ENCODE measurements at regions of chr17 and their contacts with region 1.

Region 1: DNA sequence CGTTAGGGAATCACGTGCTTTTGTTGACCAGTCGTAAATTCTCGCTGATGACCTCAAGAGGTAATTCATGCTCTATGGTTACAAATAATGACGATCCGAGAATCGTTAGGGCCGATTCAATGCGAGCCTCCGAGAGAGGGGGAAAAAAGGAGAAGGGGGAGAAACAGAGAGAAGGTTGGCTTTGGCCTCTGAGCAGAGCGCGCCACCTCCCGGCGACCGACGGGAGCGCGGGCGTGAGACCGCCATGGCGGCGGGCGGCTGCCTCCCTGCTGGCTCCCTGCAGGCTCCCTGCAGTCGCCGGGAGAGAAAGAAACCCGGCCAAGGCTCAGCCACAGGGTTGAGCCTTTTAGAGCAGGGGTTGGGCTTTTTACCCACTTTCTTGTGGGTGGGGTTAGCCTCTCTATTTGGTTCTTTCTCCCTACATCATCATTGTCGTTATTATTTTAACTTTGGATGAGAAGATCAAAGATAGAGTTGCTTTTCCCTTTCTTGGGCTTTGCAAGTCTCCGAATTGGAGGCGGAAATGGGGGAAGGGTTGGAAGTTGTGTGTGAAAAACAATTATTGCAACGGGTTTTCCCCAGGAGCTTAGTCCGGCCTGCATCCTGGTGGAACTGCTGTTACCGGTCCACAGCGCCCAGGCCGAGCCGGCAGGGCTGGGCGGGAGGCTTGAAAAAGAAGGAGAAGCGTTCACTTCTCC is 410 bp upstream of the HOXB5 start:
- DNase-seq: peak; percentile 90
- ATAC-seq: peak; percentile 67
- H3K4me3 Mint-ChIP-seq: peak overlapping the region; percentile 67
- H3K27ac Mint-ChIP-seq: no peak overlapping the region
- H3K4me1 Mint-ChIP-seq: peaks cover 40% of the 10 kb centered on the region
- H3K27me3 Mint-ChIP-seq: peaks cover 80% of the 10 kb centered on the region

Region 2: GRCh38 chr17:48131216-48131824 is 462.7 kb before region 1 on chr17:
- CTCF ChIA-PET with region 1: interaction called, 5 read pairs
- POLR2A ChIA-PET with region 1: no interaction called
- intact Hi-C with region 1: loop called in 1 of 2 experiments (anchors 5 kb)
- DNase-seq: peak; percentile 68
- ATAC-seq: peak; percentile 85
- H3K4me3 Mint-ChIP-seq: no peak overlapping the region
- H3K27ac Mint-ChIP-seq: peak overlapping the region; percentile 2
- H3K4me1 Mint-ChIP-seq: no peaks in the 10 kb centered on the region
- H3K27me3 Mint-ChIP-seq: no peaks in the 10 kb centered on the region

Region 3: GRCh38 chr17:48259694-48260291 is 334.2 kb before region 1 on chr17:
- CTCF ChIA-PET with region 1: interaction called, 13 read pairs
- POLR2A ChIA-PET with region 1: no interaction called
- intact Hi-C with region 1: loop called (anchors 2 to 5 kb)
- DNase-seq: no peak
- ATAC-seq: no peak
- H3K4me3 Mint-ChIP-seq: no peak overlapping the region
- H3K27ac Mint-ChIP-seq: no peak overlapping the region
- H3K4me1 Mint-ChIP-seq: peaks cover 5% of the 10 kb centered on the region
- H3K27me3 Mint-ChIP-seq: no peaks in the 10 kb centered on the region

Region 4: DNA sequence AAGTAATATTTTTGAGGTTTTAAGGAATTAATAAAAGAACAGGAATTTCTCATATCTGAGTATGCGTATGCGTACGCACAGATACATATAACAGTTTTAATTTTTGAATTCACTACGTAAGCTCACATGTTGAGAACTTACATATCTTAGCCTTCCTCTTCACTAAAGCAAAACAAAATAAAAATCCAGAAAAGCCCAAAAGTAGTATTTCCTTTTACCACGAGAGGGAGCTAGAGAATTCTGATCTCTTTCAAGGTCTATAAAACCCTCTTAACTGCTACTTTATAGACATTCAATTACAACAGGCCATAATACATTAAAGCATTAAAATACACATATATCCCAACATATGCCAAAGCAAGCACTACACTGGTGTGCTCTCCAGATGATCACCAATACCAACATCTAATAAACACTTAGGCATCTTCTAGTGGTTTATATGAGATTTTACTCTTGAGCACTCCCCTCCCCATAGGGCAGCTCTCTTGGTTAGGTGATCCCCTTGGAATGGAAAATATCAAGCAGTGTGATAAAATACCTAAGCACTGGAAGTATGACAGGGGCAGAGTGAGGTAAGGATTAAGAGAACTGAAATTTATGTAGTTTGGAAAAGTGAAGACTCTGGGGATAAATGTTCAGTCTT is 258.0 kb before region 1 on chr17:
- CTCF ChIA-PET with region 1: interaction called, 74 read pairs
- POLR2A ChIA-PET with region 1: interaction called, 3 read pairs
- intact Hi-C with region 1: loop called in 1 of 2 experiments (anchors 1 kb)
- DNase-seq: no peak
- ATAC-seq: peak; percentile 51
- H3K4me3 Mint-ChIP-seq: no peak overlapping the region
- H3K27ac Mint-ChIP-seq: no peak overlapping the region
- H3K4me1 Mint-ChIP-seq: peaks cover 11% of the 10 kb centered on the region
- H3K27me3 Mint-ChIP-seq: no peaks in the 10 kb centered on the region

Region 5: DNA sequence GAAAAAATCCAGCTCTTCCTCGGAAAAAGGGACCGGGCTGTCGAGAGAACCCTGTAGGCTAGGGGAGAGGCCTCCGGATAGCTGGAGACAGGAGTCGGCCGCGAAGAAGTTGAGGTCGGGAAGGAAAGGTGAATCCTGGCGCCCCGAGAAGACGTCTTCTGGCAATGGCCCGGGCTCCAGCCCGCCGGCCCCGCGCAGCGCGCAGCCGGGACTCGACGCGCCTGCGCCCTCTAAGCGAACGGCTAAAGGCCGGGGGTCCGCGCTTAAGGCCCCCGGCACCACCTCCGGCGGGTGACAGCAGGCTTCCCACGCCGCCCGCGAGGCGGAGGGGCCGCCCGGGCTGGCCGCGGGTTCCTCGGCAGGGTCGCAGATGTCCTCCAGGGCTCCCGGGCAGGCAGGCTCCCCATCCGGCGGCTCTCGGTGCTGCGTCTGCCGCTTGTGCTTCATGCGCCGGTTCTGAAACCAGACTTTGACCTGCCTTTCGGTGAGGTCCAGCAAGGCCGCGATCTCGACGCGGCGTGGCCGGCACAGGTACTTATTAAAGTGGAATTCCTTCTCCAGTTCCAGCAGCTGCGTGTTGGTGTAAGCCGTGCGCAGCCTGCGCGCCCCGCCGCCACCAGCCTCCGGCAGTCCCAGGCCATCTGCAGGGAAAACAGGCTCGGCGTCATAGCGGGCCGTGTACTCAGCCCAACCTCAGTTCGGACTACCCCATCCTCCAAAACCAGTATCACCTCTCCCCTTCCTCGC is 50.7 kb before region 1 on chr17:
- CTCF ChIA-PET with region 1: interaction called, 7 read pairs
- POLR2A ChIA-PET with region 1: no interaction called
- intact Hi-C with region 1: loop called in 1 of 2 experiments (anchors 5 kb)
- DNase-seq: peak; percentile 77
- ATAC-seq: peak; percentile 75
- H3K4me3 Mint-ChIP-seq: peak overlapping the region; percentile 75
- H3K27ac Mint-ChIP-seq: peak overlapping the region; percentile 69
- H3K4me1 Mint-ChIP-seq: peaks cover 33% of the 10 kb centered on the region
- H3K27me3 Mint-ChIP-seq: peaks cover 49% of the 10 kb centered on the region

Region 6: GRCh38 chr17:48618256-48618897 is 24.4 kb after region 1 on chr17:
- CTCF ChIA-PET with region 1: interaction called, 27 read pairs
- POLR2A ChIA-PET with region 1: no interaction called
- intact Hi-C with region 1: loop called in 1 of 2 experiments (anchors 2 kb)
- DNase-seq: peak; percentile 91
- ATAC-seq: peak; percentile 69
- H3K4me3 Mint-ChIP-seq: no peak overlapping the region
- H3K27ac Mint-ChIP-seq: no peak overlapping the region
- H3K4me1 Mint-ChIP-seq: peaks cover 36% of the 10 kb centered on the region
- H3K27me3 Mint-ChIP-seq: peaks cover 82% of the 10 kb centered on the region

Measured in activated CD4-positive, alpha-beta T cell treated with anti-CD3 and anti-CD28 coated beads for 36 hours (primary cell).